Transverse colon (tissue), 4 donors: ENCODE measurements at regions of chr1 and their contacts with region 1.

Region 1: GRCh38 chr1:17922833-17923232 is 167.7 kb downstream of the ACTL8 start:
- DNase-seq: peak; percentile 39
- H3K4me3 ChIP-seq: no peak overlapping the region
- H3K27ac ChIP-seq: no peak overlapping the region
- H3K4me1 ChIP-seq: no peaks in the 10 kb centered on the region
- H3K27me3 ChIP-seq: peaks cover 41% of the 10 kb centered on the region
- CTCF ChIP-seq: peak; percentile 18 to 49 (median 43)
- EP300 ChIP-seq: no peak
- POLR2A ChIP-seq: no peak

Region 2: DNA sequence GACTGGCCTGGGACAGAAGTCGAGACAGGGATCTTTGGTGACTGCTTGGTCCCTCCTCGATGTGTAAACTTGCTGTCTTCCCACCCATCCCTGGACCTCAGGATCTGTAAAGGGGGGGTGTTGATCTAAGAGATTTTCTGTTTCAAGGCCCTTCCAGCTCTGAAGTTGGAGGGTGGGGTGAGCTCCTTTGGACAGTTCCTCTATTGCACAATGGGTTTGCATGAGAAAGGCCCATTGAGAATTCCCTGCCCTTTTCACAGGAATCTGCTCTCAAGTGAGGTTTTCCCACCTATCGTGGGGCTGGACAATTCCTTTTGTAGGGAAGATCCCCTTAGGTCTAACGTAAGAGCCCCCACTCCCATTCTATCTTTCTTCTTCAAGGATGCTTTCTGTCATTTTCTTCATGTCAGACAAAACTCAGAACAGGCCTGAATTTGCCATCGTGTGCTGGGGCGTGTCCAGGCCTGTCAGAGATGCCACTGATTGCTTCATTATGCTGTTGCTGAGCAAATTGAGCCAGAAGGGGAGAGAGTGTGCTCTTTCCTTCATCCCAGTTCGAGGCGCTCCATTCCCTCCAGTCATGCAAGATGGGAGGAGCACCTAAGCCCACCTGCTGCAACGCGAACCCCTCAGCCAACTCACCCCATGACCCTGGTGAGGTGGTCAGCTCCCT is 34.9 kb after region 1 on chr1:
- in situ Hi-C with region 1: no loop called
- intact Hi-C with region 1: loop called (anchors 1 kb)
- DNase-seq: no peak
- H3K4me3 ChIP-seq: no peak overlapping the region
- H3K27ac ChIP-seq: no peak overlapping the region
- H3K4me1 ChIP-seq: no peaks in the 10 kb centered on the region
- H3K27me3 ChIP-seq: peaks cover 10% of the 10 kb centered on the region
- CTCF ChIP-seq: no peak
- EP300 ChIP-seq: no peak
- POLR2A ChIP-seq: no peak

Region 3: DNA sequence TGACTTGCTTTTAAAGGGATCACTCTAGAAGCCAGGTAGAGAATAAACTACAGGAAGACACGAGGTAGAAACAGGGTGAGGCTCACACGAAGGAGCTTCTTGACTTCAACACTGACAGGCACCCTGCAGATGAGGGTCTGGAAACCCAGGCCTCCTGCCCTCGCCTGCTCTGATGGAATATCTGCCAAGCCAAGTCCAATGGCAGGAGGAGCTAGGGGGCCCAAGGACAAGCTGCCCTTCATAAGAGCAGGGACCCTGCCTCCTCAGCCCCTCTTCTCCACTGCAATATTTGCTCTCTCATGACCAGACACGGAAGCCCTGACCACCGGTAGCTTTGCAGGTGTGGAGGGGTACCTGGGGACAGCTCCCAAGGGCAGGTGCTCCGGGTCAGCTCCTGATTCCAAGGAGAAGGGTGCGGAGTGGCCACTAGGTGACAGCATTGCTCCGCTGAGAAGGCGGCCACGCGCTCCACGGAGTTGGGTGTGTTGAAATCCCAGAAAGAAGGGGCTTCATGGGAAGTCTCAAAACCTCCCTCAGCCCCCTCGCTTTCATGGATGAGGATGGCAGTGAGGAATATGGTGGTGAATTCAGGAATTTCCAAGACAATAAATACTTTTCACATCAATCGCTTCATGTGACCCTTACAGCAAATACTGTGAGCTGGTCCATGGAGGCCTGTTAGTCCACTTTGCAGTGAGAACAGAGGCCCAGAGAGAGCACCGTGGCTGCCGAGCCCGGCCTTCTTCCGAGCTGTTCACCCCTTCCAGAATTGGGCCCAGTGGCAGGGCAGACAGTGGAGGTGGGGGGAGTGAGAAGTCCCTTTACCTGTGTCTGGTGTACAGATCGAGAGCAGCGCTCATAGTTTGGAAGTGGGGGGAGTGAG is 674.6 kb after region 1 on chr1:
- in situ Hi-C with region 1: loop called in 1 of 4 experiments (anchors 25 kb)
- intact Hi-C with region 1: no loop called
- DNase-seq: peak; percentile 54
- H3K4me3 ChIP-seq: no peak overlapping the region
- H3K27ac ChIP-seq: no peak overlapping the region
- H3K4me1 ChIP-seq: peaks cover 0 to 6% (median 0%) of the 10 kb centered on the region in 4 donors
- H3K27me3 ChIP-seq: peaks cover 30% of the 10 kb centered on the region
- CTCF ChIP-seq: peak; percentile 89 to 94 (median 92)
- EP300 ChIP-seq: no peak
- POLR2A ChIP-seq: no peak